ENCODE measurements at regions of chr16 and their contacts with region 1.

Region 1: GRCh38 chr16:53549970-53550690 is 47.1 kb upstream of the AKTIP start:
- DNase-seq: no peak
- ATAC-seq: peak; percentile 72
- H3K4me3 Mint-ChIP-seq: no peak overlapping the region
- H3K27ac Mint-ChIP-seq: no peak overlapping the region
- H3K4me1 Mint-ChIP-seq: peaks cover 6% of the 10 kb centered on the region
- H3K27me3 Mint-ChIP-seq: peaks cover 19% of the 10 kb centered on the region
- CTCF ChIP-seq: peak; percentile 14

Region 2: GRCh38 chr16:53528797-53529196 is 21.3 kb before region 1 on chr16:
- CTCF ChIA-PET with region 1: no interaction called
- POLR2A ChIA-PET with region 1: no interaction called
- intact Hi-C with region 1: no loop called
- DNase-seq: no peak
- ATAC-seq: no peak
- H3K4me3 Mint-ChIP-seq: no peak overlapping the region
- H3K27ac Mint-ChIP-seq: no peak overlapping the region
- H3K4me1 Mint-ChIP-seq: peaks cover 8% of the 10 kb centered on the region
- H3K27me3 Mint-ChIP-seq: no peaks in the 10 kb centered on the region
- CTCF ChIP-seq: no peak

Region 3: GRCh38 chr16:53666786-53667415 is 116.8 kb after region 1 on chr16:
- CTCF ChIA-PET with region 1: no interaction called
- POLR2A ChIA-PET with region 1: no interaction called
- intact Hi-C with region 1: no loop called
- DNase-seq: no peak
- ATAC-seq: no peak
- H3K4me3 Mint-ChIP-seq: no peak overlapping the region
- H3K27ac Mint-ChIP-seq: no peak overlapping the region
- H3K4me1 Mint-ChIP-seq: no peaks in the 10 kb centered on the region
- H3K27me3 Mint-ChIP-seq: no peaks in the 10 kb centered on the region
- CTCF ChIP-seq: no peak

Region 4: DNA sequence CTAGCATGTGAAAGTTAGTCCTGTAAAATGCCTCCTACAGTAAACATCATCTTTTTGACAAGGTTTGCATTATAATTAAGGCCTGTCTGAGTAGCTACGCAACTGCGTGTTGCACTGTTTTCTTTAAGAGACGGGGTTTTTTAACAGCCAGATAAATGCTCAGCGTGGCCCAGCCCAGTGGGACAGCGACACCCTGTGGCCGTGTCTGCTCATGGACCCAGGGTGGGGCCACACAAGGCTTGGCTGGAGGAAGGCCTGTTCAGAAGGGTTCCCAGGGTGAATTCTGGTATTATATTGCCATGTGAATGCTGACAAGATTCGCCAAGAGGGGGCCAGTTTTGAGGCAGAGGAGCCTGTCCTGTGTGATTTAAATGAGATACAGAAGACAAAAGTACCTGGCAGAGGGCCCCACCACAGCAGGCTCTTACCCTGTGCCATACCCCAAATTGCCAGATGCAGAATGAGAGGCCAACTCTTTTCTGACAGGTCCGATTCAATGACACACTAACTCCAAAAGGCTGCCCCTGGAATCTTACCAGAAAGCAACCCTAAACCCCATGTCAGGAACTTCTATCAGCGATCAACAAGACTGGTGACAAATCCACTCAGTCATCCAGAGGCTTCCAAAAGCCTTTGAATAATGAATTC is 1708.0 kb after region 1 on chr16:
- CTCF ChIA-PET with region 1: interaction called, 4 read pairs
- POLR2A ChIA-PET with region 1: no interaction called
- intact Hi-C with region 1: loop called (anchors 2 kb)
- DNase-seq: no peak
- ATAC-seq: no peak
- H3K4me3 Mint-ChIP-seq: no peak overlapping the region
- H3K27ac Mint-ChIP-seq: no peak overlapping the region
- H3K4me1 Mint-ChIP-seq: peaks cover 2% of the 10 kb centered on the region
- H3K27me3 Mint-ChIP-seq: no peaks in the 10 kb centered on the region
- CTCF ChIP-seq: no peak